Mammary epithelial cell (primary cell): ENCODE measurements at regions of chr5 and their contacts with region 1.

Region 1: DNA sequence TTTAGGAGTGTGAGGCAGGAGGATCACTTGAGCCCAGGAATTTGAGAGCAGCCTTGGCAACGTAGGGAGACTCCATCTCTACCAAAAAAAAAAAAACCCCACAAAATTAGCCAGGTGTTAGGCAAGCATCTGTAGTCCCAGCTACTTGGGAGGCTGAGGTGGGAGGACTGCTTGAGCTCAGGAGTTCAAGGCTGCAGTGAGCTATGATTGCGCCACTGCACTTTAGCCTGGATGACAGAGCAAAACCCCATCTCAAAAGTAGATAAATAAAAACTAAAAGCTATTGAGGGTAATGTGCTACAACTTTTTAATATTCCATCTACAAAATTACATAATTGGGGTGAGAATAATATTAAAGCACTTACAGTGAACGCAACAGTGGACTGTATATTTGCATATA is 5.9 kb downstream of the BDP1 start:
- DNase-seq: no peak
- H3K4me3 ChIP-seq: no peak overlapping the region
- H3K27ac ChIP-seq: no peak overlapping the region
- H3K4me1 ChIP-seq: no peaks in the 10 kb centered on the region
- H3K27me3 ChIP-seq: no peaks in the 10 kb centered on the region
- CTCF ChIP-seq: no peak

Region 2: GRCh38 chr5:71503536-71503935 is 42.2 kb after region 1 on chr5:
- CTCF ChIA-PET with region 1: no interaction called
- dilution Hi-C with region 1: loop called (anchors 5 kb)
- in situ Hi-C with region 1: no loop called
- intact Hi-C with region 1: no loop called
- DNase-seq: no peak
- H3K4me3 ChIP-seq: no peak overlapping the region
- H3K27ac ChIP-seq: no peak overlapping the region
- H3K4me1 ChIP-seq: no peaks in the 10 kb centered on the region
- H3K27me3 ChIP-seq: no peaks in the 10 kb centered on the region
- CTCF ChIP-seq: no peak

Region 3: DNA sequence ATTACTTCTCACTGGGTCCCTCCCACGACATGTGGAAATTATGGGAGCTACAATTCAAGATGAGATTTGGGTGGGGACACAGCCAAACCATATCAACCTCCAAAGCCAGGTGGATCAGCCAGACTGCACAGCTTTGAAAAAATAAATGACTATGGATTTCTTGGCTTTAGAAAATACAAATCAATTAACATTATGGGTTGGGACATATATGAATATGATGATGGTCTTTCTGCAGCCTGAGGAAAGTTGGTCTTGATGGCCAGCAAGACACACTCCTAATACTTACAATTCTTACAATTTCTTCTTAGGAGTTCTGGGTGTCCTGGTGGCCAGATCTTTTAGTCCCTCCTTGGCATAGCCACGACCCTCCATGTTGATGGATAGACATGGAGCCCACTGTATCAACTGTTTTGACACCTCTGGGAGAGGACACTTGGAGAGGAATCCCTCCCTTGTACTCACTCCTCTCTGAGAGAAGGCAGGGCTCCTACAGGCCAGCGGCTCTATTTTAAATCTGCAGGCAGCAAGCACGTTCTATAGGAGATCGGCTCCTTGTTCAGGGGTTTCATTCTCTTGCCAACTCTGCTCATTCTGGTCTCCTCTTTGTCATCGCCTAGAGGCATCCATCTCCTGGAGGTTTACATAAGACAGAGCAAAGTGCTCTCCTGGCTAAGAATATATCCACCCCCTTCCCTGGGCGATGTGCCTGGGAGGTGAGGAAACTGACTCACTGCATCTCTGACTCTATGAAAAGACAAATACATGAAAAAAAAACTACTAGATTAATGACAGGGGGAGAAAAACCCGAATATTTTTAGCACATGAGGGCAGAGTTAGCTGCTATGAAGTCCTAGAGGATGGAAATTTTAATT is 403.6 kb after region 1 on chr5:
- CTCF ChIA-PET with region 1: no interaction called
- dilution Hi-C with region 1: no loop called
- in situ Hi-C with region 1: no loop called
- intact Hi-C with region 1: no loop called
- DNase-seq: peak; percentile 73
- H3K4me3 ChIP-seq: no peak overlapping the region
- H3K27ac ChIP-seq: no peak overlapping the region
- H3K4me1 ChIP-seq: peaks cover 14% of the 10 kb centered on the region
- H3K27me3 ChIP-seq: no peaks in the 10 kb centered on the region
- CTCF ChIP-seq: no peak